Caco-2 (cell line): ENCODE measurements at regions of chr18 and their contacts with region 1.

Region 1: DNA sequence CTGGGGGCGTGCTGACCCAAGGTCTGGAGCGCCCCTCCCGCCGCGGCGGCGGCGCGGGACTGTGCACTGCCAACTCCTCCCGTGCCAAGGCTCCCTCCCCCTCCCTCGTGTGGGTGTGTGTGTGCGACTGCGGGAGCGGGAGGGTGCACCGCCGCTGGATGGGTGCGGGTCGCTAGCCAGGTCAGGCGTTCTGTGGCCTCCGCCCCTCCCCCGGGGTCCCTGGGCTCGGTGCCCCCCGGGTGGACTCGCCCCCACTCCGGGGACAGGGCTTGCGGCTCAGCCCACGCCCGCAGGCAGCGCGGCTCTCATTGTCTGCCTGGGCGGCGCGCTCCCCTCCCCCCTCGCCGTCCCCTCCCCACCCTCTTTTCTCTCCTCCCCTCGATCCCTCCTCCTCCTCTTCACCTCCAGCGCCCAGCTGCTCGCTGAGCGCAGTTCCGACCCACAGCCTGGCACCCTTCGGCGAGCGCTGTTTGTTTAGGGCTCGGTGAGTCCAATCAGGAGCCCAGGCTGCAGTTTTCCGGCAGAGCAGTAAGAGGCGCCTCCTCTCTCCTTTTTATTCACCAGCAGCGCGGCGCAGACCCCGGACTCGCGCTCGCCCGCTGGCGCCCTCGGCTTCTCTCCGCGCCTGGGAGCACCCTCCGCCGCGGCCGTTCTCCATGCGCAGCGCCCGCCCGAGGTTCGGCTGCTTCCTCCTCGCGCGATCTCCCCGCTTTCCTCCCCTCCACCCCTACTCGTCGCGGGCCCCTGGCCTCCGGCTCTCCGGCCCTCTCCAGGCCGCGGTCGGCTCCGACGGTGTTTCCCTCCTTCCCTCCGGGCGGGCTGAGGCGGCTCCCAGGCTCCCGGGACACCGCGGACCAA is at the start of gene GATA6:
- DNase-seq: peak; percentile 95 to 97
- H3K4me3 ChIP-seq: peak within 1 kb of the TSS; percentile 69
- H3K4me3 Mint-ChIP-seq: peak within 1 kb of the TSS; percentile 74
- H3K27ac Mint-ChIP-seq: peak within 1 kb of the TSS; percentile 91
- H3K4me1 ChIP-seq: no peaks in the 10 kb centered on the region; the same call in 1 of the 2 replicates
- H3K4me1 Mint-ChIP-seq: peaks cover 6% of the 10 kb centered on the region
- H3K27me3 ChIP-seq: no peaks in the 10 kb centered on the region
- H3K27me3 Mint-ChIP-seq: no peaks in the 10 kb centered on the region
- CTCF ChIP-seq: peak; percentile 8 to 38
- total RNA-seq, gene GATA6: 124 and 136 TPM in 2 replicates

Region 2: GRCh38 chr18:21980744-21981143 is 188.5 kb before region 1 on chr18:
- CTCF ChIA-PET with region 1: interaction called, 3 read pairs
- POLR2A ChIA-PET with region 1: no interaction called
- intact Hi-C with region 1: loop called (anchors 5 kb)
- DNase-seq: peak; percentile 82 to 89
- H3K4me3 ChIP-seq: no peak overlapping the region
- H3K4me3 Mint-ChIP-seq: peak overlapping the region; percentile 66
- H3K27ac Mint-ChIP-seq: peak overlapping the region; percentile 86
- H3K4me1 ChIP-seq: peaks cover 45% of the 10 kb centered on the region
- H3K4me1 Mint-ChIP-seq: peaks cover 37% of the 10 kb centered on the region
- H3K27me3 ChIP-seq: no peaks in the 10 kb centered on the region
- H3K27me3 Mint-ChIP-seq: no peaks in the 10 kb centered on the region
- CTCF ChIP-seq: no peak

Region 3: DNA sequence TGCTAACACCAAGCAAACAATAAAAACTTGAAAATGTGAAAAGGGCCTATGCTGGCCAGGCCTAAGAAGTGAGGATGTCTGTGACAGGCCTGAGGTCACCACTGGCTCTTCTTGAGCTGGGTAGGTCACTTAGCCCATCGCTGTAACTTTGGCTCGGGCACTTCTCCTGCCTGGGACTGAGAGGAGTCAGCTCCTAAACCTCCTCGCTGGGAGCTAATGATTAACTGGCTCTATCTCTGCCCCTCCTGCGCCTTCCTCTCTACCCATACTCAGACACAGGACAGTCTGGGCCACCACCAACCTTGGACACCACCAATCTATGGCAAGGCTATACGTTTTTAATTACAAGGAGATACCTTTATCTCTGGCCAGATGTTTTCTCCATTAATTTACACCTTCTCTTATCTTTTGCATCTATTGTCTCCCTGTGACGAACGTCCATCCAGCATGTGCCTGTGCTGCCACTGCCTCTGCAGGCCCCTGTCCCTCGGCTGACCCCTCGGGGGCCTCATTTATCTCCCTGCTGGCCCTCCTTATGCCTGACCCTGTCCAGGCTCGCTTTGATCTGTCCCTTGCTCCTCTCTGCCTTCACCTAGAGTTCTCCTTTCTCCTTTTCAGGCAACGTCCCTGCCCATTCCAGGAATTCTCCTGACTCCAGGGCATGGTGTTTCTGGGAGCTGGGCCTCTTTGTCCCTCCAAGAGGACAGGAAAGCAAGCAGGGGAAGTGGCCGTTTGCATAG is 148.9 kb before region 1 on chr18:
- CTCF ChIA-PET with region 1: no interaction called
- POLR2A ChIA-PET with region 1: interaction called, 5 read pairs
- intact Hi-C with region 1: loop called (anchors 1 kb)
- DNase-seq: peak; percentile 89 to 97
- H3K4me3 ChIP-seq: no peak overlapping the region
- H3K4me3 Mint-ChIP-seq: peak overlapping the region; percentile 51
- H3K27ac Mint-ChIP-seq: peak overlapping the region; percentile 59
- H3K4me1 ChIP-seq: peaks cover 66% of the 10 kb centered on the region
- H3K4me1 Mint-ChIP-seq: peaks cover 39% of the 10 kb centered on the region
- H3K27me3 ChIP-seq: no peaks in the 10 kb centered on the region
- H3K27me3 Mint-ChIP-seq: no peaks in the 10 kb centered on the region
- CTCF ChIP-seq: no peak

Region 4: GRCh38 chr18:22052405-22053105 is 116.7 kb before region 1 on chr18:
- CTCF ChIA-PET with region 1: no interaction called
- POLR2A ChIA-PET with region 1: interaction called, 15 read pairs
- intact Hi-C with region 1: no loop called
- DNase-seq: peak; percentile 31 to 59
- H3K4me3 ChIP-seq: no peak overlapping the region
- H3K4me3 Mint-ChIP-seq: no peak overlapping the region
- H3K27ac Mint-ChIP-seq: peak overlapping the region; percentile 89
- H3K4me1 ChIP-seq: peaks cover 66% of the 10 kb centered on the region
- H3K4me1 Mint-ChIP-seq: peaks cover 34% of the 10 kb centered on the region
- H3K27me3 ChIP-seq: no peaks in the 10 kb centered on the region
- H3K27me3 Mint-ChIP-seq: no peaks in the 10 kb centered on the region
- CTCF ChIP-seq: peak in 1 of 2 experiments; percentile 1

Region 5: GRCh38 chr18:22108674-22109073 is 60.6 kb before region 1 on chr18:
- CTCF ChIA-PET with region 1: interaction called, 3 read pairs
- POLR2A ChIA-PET with region 1: interaction called, 5 read pairs
- intact Hi-C with region 1: loop called (anchors 1 kb)
- DNase-seq: peak; percentile 51 to 62
- H3K4me3 ChIP-seq: no peak overlapping the region
- H3K4me3 Mint-ChIP-seq: no peak overlapping the region
- H3K27ac Mint-ChIP-seq: peak overlapping the region; percentile 74
- H3K4me1 ChIP-seq: peaks cover 53% of the 10 kb centered on the region
- H3K4me1 Mint-ChIP-seq: peaks cover 44% of the 10 kb centered on the region
- H3K27me3 ChIP-seq: no peaks in the 10 kb centered on the region
- H3K27me3 Mint-ChIP-seq: no peaks in the 10 kb centered on the region
- CTCF ChIP-seq: peak; percentile 40 to 44

Region 6: DNA sequence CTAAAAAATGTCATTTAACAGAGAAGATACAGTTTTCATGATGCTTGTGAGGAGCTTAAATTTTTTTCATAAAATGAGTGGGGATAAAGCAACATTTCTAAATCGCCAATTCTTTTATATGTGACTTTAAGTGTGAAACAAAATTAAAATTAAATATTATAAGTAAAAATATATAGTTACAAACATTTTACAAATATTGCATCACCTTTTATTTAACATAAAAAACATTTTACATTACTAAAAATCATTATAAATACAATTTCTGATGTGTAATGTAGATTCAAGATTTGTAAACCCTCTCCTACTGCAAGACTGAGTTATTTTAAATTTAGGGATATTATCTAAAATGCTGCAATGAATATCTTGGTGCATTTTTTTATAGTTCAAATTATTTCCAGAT is 44.3 kb before region 1 on chr18:
- CTCF ChIA-PET with region 1: no interaction called
- POLR2A ChIA-PET with region 1: no interaction called
- intact Hi-C with region 1: no loop called
- DNase-seq: no peak
- H3K4me3 ChIP-seq: no peak overlapping the region
- H3K4me3 Mint-ChIP-seq: no peak overlapping the region
- H3K27ac Mint-ChIP-seq: no peak overlapping the region
- H3K4me1 ChIP-seq: peaks cover 12% of the 10 kb centered on the region; the same call in 1 of the 2 replicates
- H3K4me1 Mint-ChIP-seq: peaks cover 18% of the 10 kb centered on the region
- H3K27me3 ChIP-seq: no peaks in the 10 kb centered on the region
- H3K27me3 Mint-ChIP-seq: no peaks in the 10 kb centered on the region
- CTCF ChIP-seq: no peak